ENCODE measurements at regions of chr3 and their contacts with region 1.

Region 1: DNA sequence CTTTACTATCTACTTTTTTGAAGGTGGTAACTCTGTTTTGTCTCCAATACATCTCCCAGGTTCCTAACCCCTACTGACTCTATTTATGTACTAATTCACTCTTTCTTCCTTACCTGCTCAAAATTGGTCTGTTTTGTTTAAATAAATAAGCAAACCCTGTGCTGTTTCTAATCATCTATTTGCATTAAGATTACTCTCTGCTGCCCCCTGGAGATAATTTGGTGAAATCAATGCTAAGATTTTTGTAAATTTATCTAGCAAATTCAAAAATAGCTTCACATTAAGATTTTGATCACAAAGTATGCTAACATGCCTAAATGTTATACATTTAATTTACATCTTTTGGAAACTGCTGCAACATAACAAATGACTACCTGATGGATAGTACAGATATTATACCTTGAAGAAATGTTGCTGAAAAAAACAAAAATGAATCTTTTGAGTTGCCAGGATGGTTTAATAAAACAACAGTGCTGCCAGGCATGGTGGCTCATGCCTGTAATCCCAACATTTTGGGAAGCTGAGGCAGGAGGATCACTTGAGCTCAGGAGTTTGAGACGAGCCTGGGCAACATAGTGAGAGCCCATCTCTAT is 4.4 kb upstream of the CD200R1 start:
- DNase-seq: peak; percentile 11
- H3K4me3 ChIP-seq: no peak overlapping the region
- H3K27ac ChIP-seq: no peak overlapping the region
- H3K27me3 ChIP-seq: no peaks in the 10 kb centered on the region
- CTCF ChIP-seq: peak; percentile 69

Region 2: GRCh38 chr3:112629425-112629824 is 349.9 kb before region 1 on chr3:
- CTCF ChIA-PET with region 1: no interaction called
- POLR2A ChIA-PET with region 1: no interaction called
- DNase-seq: peak; percentile 71
- H3K4me3 ChIP-seq: no peak overlapping the region
- H3K27ac ChIP-seq: no peak overlapping the region
- H3K27me3 ChIP-seq: no peaks in the 10 kb centered on the region
- CTCF ChIP-seq: no peak

Region 3: GRCh38 chr3:112653209-112653871 is 326.0 kb before region 1 on chr3:
- CTCF ChIA-PET with region 1: interaction called, 12 read pairs
- POLR2A ChIA-PET with region 1: no interaction called
- DNase-seq: peak; percentile 92
- H3K4me3 ChIP-seq: no peak overlapping the region
- H3K27ac ChIP-seq: peak overlapping the region; percentile 99
- H3K27me3 ChIP-seq: no peaks in the 10 kb centered on the region
- CTCF ChIP-seq: no peak

Region 4: DNA sequence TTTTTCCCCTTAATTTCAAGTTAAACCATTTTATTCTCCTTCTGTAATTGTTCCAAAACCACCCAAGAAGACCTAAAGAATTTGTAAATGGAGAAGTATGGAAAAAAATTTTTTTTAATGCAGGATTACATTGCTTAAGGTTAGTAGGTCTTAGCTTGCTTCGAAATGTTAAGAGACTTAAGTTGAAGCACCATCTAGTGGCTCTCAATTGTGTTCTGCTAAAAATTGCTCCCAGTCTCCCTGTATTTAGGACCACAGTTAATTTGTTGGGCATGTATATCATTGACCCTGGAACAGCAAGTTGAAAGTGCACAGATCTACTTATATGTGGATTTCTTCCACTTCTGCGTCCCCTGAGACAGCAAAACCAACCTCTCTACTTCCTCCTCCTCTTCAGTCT is 165.1 kb before region 1 on chr3:
- CTCF ChIA-PET with region 1: interaction called, 29 read pairs
- POLR2A ChIA-PET with region 1: no interaction called
- DNase-seq: peak; percentile 60
- H3K4me3 ChIP-seq: no peak overlapping the region
- H3K27ac ChIP-seq: no peak overlapping the region
- H3K27me3 ChIP-seq: no peaks in the 10 kb centered on the region
- CTCF ChIP-seq: peak; percentile 77

Region 5: DNA sequence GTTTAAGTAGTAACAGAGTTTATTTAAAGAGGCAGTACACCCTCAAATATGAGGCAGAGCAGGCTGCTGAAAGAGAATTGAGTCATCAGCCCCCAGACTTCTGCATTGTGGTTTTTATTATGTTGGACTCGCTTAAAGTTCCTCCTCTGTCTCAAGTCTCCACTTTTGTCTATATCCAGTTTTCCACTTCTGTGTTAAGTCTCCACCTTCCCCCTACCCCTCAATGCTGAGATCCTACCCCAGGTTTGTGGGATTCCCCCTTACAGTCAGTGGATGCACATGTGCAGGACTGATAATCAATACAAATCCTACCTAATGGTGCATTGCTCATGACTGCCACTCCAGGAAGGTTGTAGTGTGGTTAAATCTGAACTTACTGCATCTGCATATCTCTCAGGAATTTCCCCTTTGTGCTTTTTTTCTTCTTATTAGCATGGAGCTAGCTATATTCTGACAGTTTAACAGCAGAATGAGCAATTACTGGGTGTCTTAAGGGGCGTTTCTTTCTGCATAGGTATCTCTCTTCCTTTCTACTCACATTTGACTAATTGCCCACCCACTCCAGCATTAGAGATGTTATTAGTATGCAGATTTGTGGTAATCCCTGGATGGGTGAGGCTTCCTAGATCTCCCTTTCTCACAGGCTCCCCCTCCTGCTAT is 120.8 kb before region 1 on chr3:
- CTCF ChIA-PET with region 1: no interaction called
- POLR2A ChIA-PET with region 1: no interaction called
- DNase-seq: no peak
- H3K4me3 ChIP-seq: no peak overlapping the region
- H3K27ac ChIP-seq: no peak overlapping the region
- H3K27me3 ChIP-seq: no peaks in the 10 kb centered on the region
- CTCF ChIP-seq: no peak

Region 6: DNA sequence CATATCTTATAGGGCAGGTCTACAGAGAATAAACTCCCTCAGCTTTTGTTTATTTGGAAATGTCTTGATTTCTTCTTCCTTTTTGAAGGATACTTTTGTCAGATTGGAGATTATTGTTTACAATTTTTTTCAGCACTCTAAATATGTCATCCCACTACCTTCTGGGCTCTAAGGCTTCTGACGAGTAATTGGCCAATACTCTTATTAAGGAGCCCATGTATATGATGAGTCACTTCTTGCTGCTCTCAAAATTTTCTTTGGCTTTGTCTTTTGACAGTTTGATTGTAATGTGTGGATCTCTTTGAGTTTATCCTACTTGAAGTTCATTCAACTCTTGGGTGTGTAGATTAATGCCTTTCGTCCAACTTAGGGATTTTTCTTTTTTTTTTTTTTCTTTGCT is 103.8 kb before region 1 on chr3:
- CTCF ChIA-PET with region 1: no interaction called
- POLR2A ChIA-PET with region 1: no interaction called
- DNase-seq: no peak
- H3K4me3 ChIP-seq: no peak overlapping the region
- H3K27ac ChIP-seq: no peak overlapping the region
- H3K27me3 ChIP-seq: peaks cover 2% of the 10 kb centered on the region
- CTCF ChIP-seq: no peak

Region 7: GRCh38 chr3:112966633-112967032 is 12.7 kb before region 1 on chr3:
- CTCF ChIA-PET with region 1: interaction called, 14 read pairs
- POLR2A ChIA-PET with region 1: no interaction called
- DNase-seq: no peak
- H3K4me3 ChIP-seq: no peak overlapping the region
- H3K27ac ChIP-seq: no peak overlapping the region
- H3K27me3 ChIP-seq: peaks cover 23% of the 10 kb centered on the region
- CTCF ChIP-seq: no peak

Region 8: GRCh38 chr3:113183748-113184661 is 204.7 kb after region 1 on chr3:
- CTCF ChIA-PET with region 1: no interaction called
- POLR2A ChIA-PET with region 1: no interaction called
- DNase-seq: no peak
- H3K4me3 ChIP-seq: no peak overlapping the region
- H3K27ac ChIP-seq: no peak overlapping the region
- H3K27me3 ChIP-seq: peaks cover 5% of the 10 kb centered on the region
- CTCF ChIP-seq: no peak